ENCODE measurements at regions of chr2 and their contacts with region 1.

Region 1: GRCh38 chr2:235595422-235596010 is 101.7 kb downstream of the AGAP1 start:
- DNase-seq: peak in 8 of 14 experiments; percentile 7 to 49 (median 15)
- ATAC-seq: no peak
- H3K4me3 ChIP-seq: no peak overlapping the region
- H3K4me3 Mint-ChIP-seq: no peak overlapping the region
- H3K27ac ChIP-seq: no peak overlapping the region
- H3K27ac Mint-ChIP-seq: no peak overlapping the region
- H3K4me1 ChIP-seq: no peaks in the 10 kb centered on the region
- H3K4me1 Mint-ChIP-seq: no peaks in the 10 kb centered on the region
- H3K27me3 ChIP-seq: peaks cover 0 to 2% of the 10 kb centered on the region in 2 experiments
- H3K27me3 Mint-ChIP-seq: peaks cover 13% of the 10 kb centered on the region
- CTCF ChIP-seq: peak; percentile 31

Region 2: DNA sequence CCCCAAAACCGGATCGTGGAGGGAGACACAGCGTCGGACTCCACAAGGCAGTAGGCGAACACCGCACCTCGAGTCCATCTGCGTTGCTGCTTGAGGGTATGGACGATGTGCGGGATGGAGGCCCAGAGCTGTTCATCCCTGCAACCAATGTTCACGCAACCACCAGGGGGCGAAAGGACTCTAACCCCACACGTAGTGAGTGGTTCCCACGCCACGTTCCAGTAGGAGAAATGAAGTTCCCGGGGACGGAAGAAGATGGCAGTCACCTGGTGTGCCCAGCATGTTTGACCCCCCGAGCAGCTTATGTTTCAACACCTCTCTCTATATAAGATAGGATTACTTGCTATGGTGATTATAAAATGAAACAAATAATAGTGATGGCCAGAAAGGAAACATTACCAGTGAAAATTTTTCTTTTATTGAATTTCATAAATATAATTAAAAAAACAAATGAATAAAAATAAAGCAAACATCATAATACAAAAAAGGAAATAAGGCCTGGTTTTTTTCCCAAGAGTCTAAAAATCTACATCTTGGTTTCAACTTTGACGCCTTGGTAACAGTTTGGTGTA is 459.4 kb before region 1 on chr2:
- CTCF ChIA-PET with region 1: no interaction called
- POLR2A ChIA-PET with region 1: no interaction called
- intact Hi-C with region 1: loop called in 1 of 2 experiments (anchors 2 kb)
- DNase-seq: peak; percentile 3 to 67 (median 24)
- ATAC-seq: no peak
- H3K4me3 ChIP-seq: no peak overlapping the region
- H3K4me3 Mint-ChIP-seq: no peak overlapping the region
- H3K27ac ChIP-seq: no peak overlapping the region
- H3K27ac Mint-ChIP-seq: no peak overlapping the region
- H3K4me1 ChIP-seq: no peaks in the 10 kb centered on the region
- H3K4me1 Mint-ChIP-seq: no peaks in the 10 kb centered on the region
- H3K27me3 ChIP-seq: peaks cover 7% of the 10 kb centered on the region in 2 experiments
- H3K27me3 Mint-ChIP-seq: peaks cover 58% of the 10 kb centered on the region
- CTCF ChIP-seq: peak; percentile 49

Region 3: DNA sequence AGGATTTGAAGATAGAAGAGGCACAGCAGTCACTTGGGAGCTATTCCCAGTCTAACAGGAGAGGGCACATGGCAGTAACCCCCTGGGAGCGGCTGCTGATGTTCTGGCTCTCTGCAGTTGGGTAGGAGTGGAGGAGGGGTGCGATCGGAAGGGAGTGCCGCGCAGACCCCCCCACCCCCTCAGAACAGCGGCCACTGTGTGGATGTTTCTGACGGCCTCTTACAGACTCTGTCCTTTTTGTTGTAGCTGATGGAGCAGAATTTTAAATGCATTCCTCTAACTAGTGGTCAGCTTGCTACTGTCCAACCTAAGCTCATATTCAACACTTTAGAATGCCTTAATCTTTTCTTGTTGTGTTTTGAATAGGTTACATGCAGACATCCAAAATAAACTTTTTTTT is 26.2 kb after region 1 on chr2:
- CTCF ChIA-PET with region 1: no interaction called
- POLR2A ChIA-PET with region 1: no interaction called
- intact Hi-C with region 1: no loop called
- DNase-seq: no peak
- ATAC-seq: no peak
- H3K4me3 ChIP-seq: no peak overlapping the region
- H3K4me3 Mint-ChIP-seq: no peak overlapping the region
- H3K27ac ChIP-seq: no peak overlapping the region
- H3K27ac Mint-ChIP-seq: no peak overlapping the region
- H3K4me1 ChIP-seq: no peaks in the 10 kb centered on the region
- H3K4me1 Mint-ChIP-seq: no peaks in the 10 kb centered on the region
- H3K27me3 ChIP-seq: no peaks in the 10 kb centered on the region
- H3K27me3 Mint-ChIP-seq: no peaks in the 10 kb centered on the region
- CTCF ChIP-seq: no peak

Region 4: DNA sequence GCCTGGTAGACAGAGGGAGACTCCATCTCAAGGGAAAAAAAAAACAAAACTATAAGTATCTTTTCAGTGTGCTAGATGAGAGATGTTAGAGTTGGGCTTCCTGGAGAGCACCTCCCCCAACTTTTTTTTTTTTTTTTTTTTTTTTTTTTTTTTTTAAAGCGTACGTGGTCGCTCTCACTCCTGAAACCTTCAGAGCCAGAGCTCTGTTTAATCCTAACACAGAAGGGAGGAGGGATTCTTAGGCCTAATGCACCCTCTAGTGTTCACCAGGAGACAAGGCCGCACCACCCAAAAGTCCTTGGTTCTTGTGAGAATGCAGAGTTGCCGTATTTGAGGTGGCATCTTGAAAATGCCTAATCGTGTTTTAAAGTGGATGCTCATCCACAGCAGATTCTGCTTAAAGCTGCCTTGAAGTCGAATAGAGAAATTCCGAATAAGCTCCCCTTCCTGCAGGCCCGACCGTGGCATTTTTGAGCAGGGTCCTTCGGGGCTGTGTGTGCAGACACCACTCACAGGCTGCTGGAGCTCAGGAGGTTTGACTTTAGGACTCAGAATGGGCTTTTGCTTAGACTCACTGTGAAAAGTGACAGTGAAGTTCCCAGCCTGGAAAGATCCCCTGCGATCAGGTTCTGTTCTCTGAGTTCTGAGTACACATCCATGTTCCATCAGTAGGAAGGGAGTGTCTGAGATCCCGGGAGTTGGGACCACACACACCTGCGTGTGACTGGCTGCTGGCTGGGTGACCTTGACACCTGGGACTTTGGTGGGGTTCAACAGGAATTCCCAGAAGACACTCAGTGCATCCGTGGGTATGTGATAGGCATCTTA is 151.0 kb after region 1 on chr2:
- CTCF ChIA-PET with region 1: no interaction called
- POLR2A ChIA-PET with region 1: no interaction called
- intact Hi-C with region 1: loop called in 1 of 2 experiments (anchors 10 kb)
- DNase-seq: peak in 10 of 14 experiments; percentile 15 to 74 (median 27)
- ATAC-seq: peak; percentile 49
- H3K4me3 ChIP-seq: no peak overlapping the region
- H3K4me3 Mint-ChIP-seq: no peak overlapping the region
- H3K27ac ChIP-seq: no peak overlapping the region
- H3K27ac Mint-ChIP-seq: no peak overlapping the region
- H3K4me1 ChIP-seq: peaks cover 4% of the 10 kb centered on the region
- H3K4me1 Mint-ChIP-seq: no peaks in the 10 kb centered on the region
- H3K27me3 ChIP-seq: peaks cover 2 to 3% of the 10 kb centered on the region in 2 experiments
- H3K27me3 Mint-ChIP-seq: peaks cover 25% of the 10 kb centered on the region
- CTCF ChIP-seq: peak; percentile 64